Right ventricle myocardium inferior (tissue), 1 donor: ENCODE measurements at regions of chr16 and their contacts with region 1.

Region 1: GRCh38 chr16:77805398-77805797 is 17.0 kb downstream of the VAT1L start:
- DNase-seq: peak; percentile 76
- ATAC-seq: peak; percentile 72

Region 2: DNA sequence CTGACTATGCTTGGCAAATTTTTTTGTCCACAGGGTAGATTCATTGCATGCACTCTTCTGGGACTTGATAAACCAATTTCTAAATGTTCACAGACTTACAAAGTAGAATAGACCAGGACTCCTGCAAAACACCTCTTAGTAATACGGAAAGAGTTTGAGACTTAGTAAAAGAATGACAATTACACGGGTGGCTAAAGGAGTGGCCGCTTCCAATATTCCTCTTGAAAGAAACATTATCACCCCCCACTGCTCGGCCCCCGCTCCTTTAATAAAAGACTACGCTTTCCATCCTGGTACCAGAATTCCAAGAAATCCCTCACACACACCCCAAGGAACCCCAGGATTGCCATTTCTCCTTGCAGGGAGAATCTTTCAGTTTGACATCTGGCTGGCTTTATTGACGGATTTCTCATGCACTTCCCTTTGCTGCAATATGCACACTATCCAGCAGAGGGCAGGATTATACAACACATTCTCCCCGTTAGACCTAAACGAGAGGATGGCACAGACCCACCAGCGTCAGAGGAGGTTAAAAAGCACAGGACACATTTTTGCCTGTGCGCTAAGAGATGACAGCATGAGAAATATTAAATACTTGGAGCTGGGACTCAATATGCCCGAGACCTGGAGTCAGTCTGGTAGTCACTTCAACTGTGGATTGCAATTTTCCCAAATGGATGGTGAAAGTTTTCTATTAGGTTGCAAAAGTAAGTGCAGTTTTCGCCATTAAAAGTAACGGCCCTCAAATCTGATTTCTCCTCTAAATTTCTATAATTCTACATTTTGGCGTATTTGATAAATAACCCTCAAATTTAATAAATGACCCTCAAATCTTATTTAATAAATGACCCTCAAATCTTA is 129.7 kb before region 1 on chr16:
- intact Hi-C with region 1: no loop called
- DNase-seq: no peak
- ATAC-seq: peak; percentile 86

Region 3: DNA sequence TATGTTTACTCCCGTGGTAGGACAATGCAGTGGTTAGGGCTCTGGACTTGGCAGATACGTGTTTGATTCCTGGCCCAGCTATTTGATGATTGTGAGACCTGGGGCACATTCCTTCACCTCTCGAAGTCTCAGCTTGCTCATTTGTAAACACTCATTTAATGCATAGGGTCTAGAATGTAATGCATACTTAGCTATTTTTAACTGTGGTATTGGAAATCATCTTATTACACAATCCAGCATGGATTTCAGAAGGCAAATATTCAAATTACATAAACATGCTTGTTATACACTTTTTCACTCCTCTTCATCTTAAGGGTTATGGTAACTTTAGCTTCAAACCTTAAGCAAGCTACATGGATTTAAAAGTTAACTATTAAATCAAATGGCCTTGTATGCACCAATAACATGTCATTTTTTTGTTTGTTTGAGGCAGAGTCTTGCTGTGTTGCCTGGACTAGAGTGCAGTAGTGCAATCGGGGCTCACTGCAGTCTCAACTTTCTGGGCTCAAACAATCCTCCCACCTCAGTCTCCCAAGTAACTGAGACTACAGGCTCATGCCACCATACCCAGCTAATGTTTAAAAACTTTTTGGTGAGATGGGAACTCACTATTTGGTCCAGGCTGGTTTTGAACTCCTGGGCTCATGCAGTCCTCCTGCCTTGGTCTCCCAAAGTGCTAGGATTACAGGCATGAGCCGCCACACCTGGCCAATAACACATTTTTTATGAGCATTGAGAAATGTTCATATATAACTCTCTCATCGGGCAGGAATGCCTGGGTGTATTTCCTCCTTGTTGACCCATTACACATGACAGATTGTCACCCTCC is 35.5 kb after region 1 on chr16:
- intact Hi-C with region 1: loop called (anchors 5 kb)
- DNase-seq: no peak
- ATAC-seq: no peak